ENCODE measurements at regions of chr3 and their contacts with region 1.

Region 1: GRCh38 chr3:18389108-18389733 is 35.9 kb downstream of the SATB1 start:
- DNase-seq: peak in 15 of 35 experiments; percentile 0 to 69 (median 29)
- ATAC-seq: peak in 2 of 4 experiments; percentile 23 to 47
- H3K4me3 ChIP-seq: no peak overlapping the region
- H3K4me3 Mint-ChIP-seq: peak overlapping the region in 1 of 3 donors; percentile 35
- H3K27ac ChIP-seq: no peak overlapping the region
- H3K27ac Mint-ChIP-seq: peak overlapping the region in 1 of 2 donors; percentile 86
- H3K4me1 ChIP-seq: peaks cover 0 to 79% of the 10 kb centered on the region in 2 experiments
- H3K4me1 Mint-ChIP-seq: peaks cover 72 to 83% (median 75%) of the 10 kb centered on the region in 3 donors
- H3K27me3 ChIP-seq: no peaks in the 10 kb centered on the region
- H3K27me3 Mint-ChIP-seq: no peaks in the 10 kb centered on the region

Region 2: DNA sequence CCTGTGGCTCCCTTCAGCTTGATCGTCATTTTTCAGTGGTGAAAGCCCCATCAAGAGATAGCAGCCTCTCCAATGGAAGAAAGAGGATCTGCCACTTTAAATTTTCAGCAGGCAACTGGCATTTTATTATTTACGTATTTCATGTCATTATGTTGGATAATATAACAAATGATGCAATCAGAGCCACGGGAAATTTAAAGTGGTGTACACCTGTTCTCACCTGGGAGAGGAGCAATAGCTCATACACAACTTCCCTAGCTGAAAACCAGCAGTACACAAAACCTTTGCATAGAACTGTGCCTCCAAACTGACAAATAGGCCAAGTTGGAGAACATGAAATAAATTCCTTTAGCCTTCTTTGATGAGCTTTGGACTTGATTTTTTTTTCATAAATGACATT is 101.0 kb before region 1 on chr3:
- CTCF ChIA-PET with region 1: no interaction called
- POLR2A ChIA-PET with region 1: no interaction called
- DNase-seq: no peak
- ATAC-seq: no peak
- H3K4me3 ChIP-seq: no peak overlapping the region
- H3K4me3 Mint-ChIP-seq: no peak overlapping the region
- H3K27ac ChIP-seq: no peak overlapping the region
- H3K27ac Mint-ChIP-seq: no peak overlapping the region
- H3K4me1 ChIP-seq: no peaks in the 10 kb centered on the region
- H3K4me1 Mint-ChIP-seq: no peaks in the 10 kb centered on the region
- H3K27me3 ChIP-seq: peaks cover 0 to 2% of the 10 kb centered on the region in 2 experiments
- H3K27me3 Mint-ChIP-seq: peaks cover 7 to 8% of the 10 kb centered on the region in 2 donors

Region 3: DNA sequence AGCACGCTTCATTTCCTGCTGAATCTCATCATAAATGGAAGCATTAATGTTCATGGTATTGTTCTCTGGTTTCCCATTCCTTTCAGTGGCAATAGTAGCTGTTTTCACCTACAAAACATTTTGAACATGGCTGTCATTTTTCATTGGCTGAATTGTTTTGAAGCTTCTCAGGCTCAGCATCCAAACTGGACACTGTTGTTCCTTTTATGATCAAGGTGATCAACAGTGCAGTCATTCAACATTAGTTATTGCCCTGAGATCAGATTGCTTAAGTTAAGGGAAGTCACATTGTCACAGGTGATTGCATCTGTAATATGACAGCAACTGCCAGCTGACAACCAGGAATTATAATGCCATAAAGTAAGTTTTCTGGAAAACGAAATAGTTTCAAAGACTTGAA is 11.0 kb before region 1 on chr3:
- CTCF ChIA-PET with region 1: interaction called, 10 to 24 read pairs
- POLR2A ChIA-PET with region 1: interaction called in 1 of 2 experiments, 3 read pairs
- DNase-seq: no peak
- ATAC-seq: no peak
- H3K4me3 ChIP-seq: no peak overlapping the region
- H3K4me3 Mint-ChIP-seq: no peak overlapping the region
- H3K27ac ChIP-seq: no peak overlapping the region
- H3K27ac Mint-ChIP-seq: peak overlapping the region in 1 of 2 donors; percentile 34
- H3K4me1 ChIP-seq: peaks cover 7 to 72% of the 10 kb centered on the region in 2 experiments
- H3K4me1 Mint-ChIP-seq: peaks cover 82 to 84% (median 83%) of the 10 kb centered on the region in 3 donors
- H3K27me3 ChIP-seq: no peaks in the 10 kb centered on the region
- H3K27me3 Mint-ChIP-seq: no peaks in the 10 kb centered on the region

Region 4: GRCh38 chr3:18401300-18401961 is 12.2 kb after region 1 on chr3:
- CTCF ChIA-PET with region 1: interaction called, 4 to 20 read pairs
- POLR2A ChIA-PET with region 1: interaction called, 10 to 11 read pairs
- DNase-seq: peak in 1 of 35 experiments; percentile 31
- ATAC-seq: peak; percentile 38 to 65 (median 54)
- H3K4me3 ChIP-seq: no peak overlapping the region
- H3K4me3 Mint-ChIP-seq: peak overlapping the region; percentile 54 to 65 (median 64)
- H3K27ac ChIP-seq: peak overlapping the region; percentile 42
- H3K27ac Mint-ChIP-seq: peak overlapping the region; percentile 91 to 93
- H3K4me1 ChIP-seq: peaks cover 5 to 86% of the 10 kb centered on the region in 2 experiments
- H3K4me1 Mint-ChIP-seq: peaks cover 96 to 100% (median 98%) of the 10 kb centered on the region in 3 donors
- H3K27me3 ChIP-seq: no peaks in the 10 kb centered on the region
- H3K27me3 Mint-ChIP-seq: no peaks in the 10 kb centered on the region

Region 5: GRCh38 chr3:18633020-18633419 is 243.8 kb after region 1 on chr3:
- CTCF ChIA-PET with region 1: no interaction called
- POLR2A ChIA-PET with region 1: no interaction called
- DNase-seq: no peak
- ATAC-seq: no peak
- H3K4me3 ChIP-seq: no peak overlapping the region
- H3K4me3 Mint-ChIP-seq: no peak overlapping the region
- H3K27ac ChIP-seq: no peak overlapping the region
- H3K27ac Mint-ChIP-seq: no peak overlapping the region
- H3K4me1 ChIP-seq: no peaks in the 10 kb centered on the region
- H3K4me1 Mint-ChIP-seq: peaks cover 0 to 4% (median 0%) of the 10 kb centered on the region in 3 donors
- H3K27me3 ChIP-seq: no peaks in the 10 kb centered on the region
- H3K27me3 Mint-ChIP-seq: no peaks in the 10 kb centered on the region

Region 6: GRCh38 chr3:18747383-18747782 is 358.2 kb after region 1 on chr3:
- CTCF ChIA-PET with region 1: no interaction called
- POLR2A ChIA-PET with region 1: no interaction called
- DNase-seq: no peak
- ATAC-seq: no peak
- H3K4me3 ChIP-seq: no peak overlapping the region
- H3K4me3 Mint-ChIP-seq: no peak overlapping the region
- H3K27ac ChIP-seq: no peak overlapping the region
- H3K27ac Mint-ChIP-seq: no peak overlapping the region
- H3K4me1 ChIP-seq: peaks cover 12 to 40% of the 10 kb centered on the region in 2 experiments
- H3K4me1 Mint-ChIP-seq: peaks cover 74 to 76% (median 76%) of the 10 kb centered on the region in 3 donors
- H3K27me3 ChIP-seq: no peaks in the 10 kb centered on the region
- H3K27me3 Mint-ChIP-seq: no peaks in the 10 kb centered on the region